ENCODE measurements at regions of chr6 and their contacts with region 1.

Region 1: GRCh38 chr6:56902641-56903464 is 52.1 kb upstream of the BEND6 start:
- DNase-seq: peak; percentile 45
- CTCF ChIP-seq: peak; percentile 70

Region 2: DNA sequence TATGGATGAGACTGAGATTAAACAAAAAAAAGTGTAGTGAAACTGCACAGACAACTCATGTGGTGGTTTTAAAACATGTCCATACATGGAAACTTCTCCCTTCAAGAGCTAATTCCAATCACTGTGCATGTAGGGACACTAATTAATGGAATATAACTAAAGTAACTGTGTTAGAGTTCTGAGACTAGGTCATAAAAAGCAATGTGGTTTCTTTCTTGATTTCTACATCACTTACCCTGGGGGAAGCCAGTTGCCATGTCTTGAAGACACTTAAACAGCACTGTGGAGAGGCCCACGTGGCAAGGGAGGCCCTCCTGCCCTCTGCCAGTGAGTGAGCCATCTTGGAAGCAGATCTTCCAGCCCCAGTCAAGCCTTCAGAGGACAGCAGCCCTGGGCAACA is 142.0 kb before region 1 on chr6:
- CTCF ChIA-PET with region 1: no interaction called
- POLR2A ChIA-PET with region 1: no interaction called
- DNase-seq: no peak
- CTCF ChIP-seq: no peak

Region 3: GRCh38 chr6:56802584-56802983 is 100.3 kb before region 1 on chr6:
- CTCF ChIA-PET with region 1: no interaction called
- POLR2A ChIA-PET with region 1: no interaction called
- DNase-seq: no peak
- CTCF ChIP-seq: no peak

Region 4: GRCh38 chr6:56851541-56852259 is 51.2 kb before region 1 on chr6:
- CTCF ChIA-PET with region 1: interaction called, 11 read pairs
- POLR2A ChIA-PET with region 1: no interaction called
- DNase-seq: peak; percentile 73
- CTCF ChIP-seq: peak; percentile 67

Region 5: DNA sequence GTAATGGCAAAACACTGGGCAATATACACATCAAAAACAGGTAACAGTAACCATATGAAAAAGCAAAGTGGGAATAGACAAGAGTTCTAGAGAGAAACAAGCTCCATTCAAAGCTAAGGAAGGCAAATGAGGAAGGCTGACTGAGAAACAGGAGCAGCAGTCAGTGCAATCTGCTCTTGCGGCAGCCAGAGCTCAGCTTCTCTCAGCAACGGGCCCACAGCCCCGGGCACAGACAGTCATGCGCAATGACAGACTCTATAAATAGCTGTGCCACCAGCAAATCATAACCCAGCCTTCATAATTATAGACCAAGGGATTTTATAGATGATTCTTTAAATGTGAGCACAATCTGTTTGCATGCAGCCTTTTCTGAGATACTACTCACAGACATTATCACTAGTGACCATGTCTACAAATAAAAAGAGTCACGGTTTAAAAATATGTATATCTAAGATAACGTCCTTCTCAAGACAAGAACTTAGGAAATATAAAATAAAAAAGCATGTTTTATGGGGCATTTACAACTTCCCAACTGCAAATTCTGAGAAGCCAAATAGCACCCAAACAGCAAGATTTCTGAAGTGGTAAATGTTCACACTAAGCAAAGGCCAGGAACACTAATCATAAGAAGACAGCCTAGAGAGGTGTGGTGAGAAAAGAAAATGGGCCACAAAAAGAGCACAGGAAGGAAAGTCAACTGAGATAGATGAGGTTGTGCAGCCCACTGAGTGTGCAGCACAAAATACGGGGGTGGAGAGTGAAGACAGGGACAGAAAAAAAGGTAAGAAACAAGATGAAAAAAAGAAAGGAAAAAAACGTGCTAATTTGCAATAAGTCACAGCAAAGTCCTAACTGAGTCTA is 12.2 kb after region 1 on chr6:
- CTCF ChIA-PET with region 1: interaction called, 67 read pairs
- POLR2A ChIA-PET with region 1: no interaction called
- DNase-seq: no peak
- CTCF ChIP-seq: no peak

Region 6: GRCh38 chr6:56933650-56934049 is 30.8 kb after region 1 on chr6:
- CTCF ChIA-PET with region 1: interaction called, 28 read pairs
- POLR2A ChIA-PET with region 1: no interaction called
- DNase-seq: peak; percentile 20
- CTCF ChIP-seq: no peak

Region 7: DNA sequence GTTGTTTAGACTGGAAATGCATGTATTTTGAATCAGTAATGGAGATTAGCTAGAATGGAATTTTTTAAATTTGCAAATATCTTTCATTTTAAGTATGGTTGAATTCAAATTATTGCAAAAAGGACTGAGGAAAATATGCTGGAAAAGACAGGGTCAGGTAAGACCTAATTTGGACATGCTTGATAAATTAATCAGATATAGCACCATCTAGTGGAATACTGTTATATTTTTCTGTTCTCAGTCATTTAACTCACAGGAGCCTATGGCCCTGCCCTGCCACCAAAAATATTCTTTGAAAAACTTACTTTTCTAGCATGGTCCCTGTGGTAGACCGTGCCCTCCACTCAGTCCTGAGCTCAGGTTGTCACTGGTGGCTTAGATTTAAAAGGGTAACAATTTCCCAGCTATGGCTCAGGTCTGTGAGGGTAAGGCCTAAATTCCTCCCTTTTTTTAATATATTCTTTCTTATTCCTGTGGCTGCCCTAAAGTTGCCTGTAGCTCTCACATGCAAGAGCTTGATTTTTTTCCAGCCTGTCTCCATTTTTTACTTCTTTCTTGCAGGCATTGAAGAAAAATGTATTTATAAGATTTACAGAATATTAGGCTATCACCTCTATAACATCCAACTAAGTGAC is 118.3 kb after region 1 on chr6:
- CTCF ChIA-PET with region 1: interaction called, 28 read pairs
- POLR2A ChIA-PET with region 1: no interaction called
- DNase-seq: peak; percentile 61
- CTCF ChIP-seq: peak; percentile 49

Region 8: GRCh38 chr6:57324538-57324937 is 421.7 kb after region 1 on chr6:
- CTCF ChIA-PET with region 1: interaction called, 34 read pairs
- POLR2A ChIA-PET with region 1: no interaction called
- DNase-seq: no peak
- CTCF ChIP-seq: peak; percentile 26

Measured in GM10248 (cell line).